ENCODE measurements at regions of chr16 and their contacts with region 1.

Region 1: DNA sequence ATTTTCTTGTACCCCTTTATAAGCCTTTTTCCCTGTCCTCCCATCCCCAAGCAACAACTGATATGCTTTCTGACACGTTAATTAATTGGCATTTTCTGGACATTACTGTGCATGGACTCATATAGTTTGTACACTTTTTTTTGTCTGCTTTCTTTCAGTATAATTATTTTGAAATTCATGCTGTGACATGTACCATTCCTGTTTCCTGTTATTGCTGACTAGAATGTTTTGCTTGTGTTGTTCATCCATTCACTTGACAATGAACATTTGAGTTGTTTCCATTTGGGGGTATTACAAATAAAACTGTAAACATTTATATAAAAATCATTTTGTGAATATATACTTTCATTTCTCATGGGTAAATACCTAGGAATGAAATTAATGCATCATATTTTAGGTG is 50.6 kb downstream of the RBBP6 start:
- DNase-seq: no peak

Region 2: DNA sequence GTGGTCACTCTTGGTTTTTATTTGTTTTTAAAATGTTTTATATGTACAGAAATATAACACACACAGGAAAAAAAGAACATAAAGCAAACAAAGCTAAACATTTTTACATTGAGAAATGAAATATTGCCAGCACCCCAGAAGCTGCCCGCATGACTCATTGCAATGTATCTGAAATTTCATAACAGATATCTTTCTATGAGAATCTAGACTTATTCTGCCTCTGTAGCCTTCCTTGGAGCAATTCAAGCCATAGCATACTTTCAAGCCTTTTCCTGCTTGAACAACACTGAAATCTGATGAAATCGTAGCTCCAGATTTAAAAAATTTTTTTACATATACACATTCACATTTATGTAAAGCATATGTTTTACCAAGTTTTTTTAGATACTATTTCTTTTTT is 36.3 kb after region 1 on chr16:
- intact Hi-C with region 1: no loop called
- DNase-seq: no peak

Region 3: GRCh38 chr16:24689145-24689544 is 99.1 kb after region 1 on chr16:
- intact Hi-C with region 1: loop called (anchors 10 kb)
- DNase-seq: peak in 4 of 10 donors; percentile 17 to 89 (median 32)

Measured in posterior cingulate gyrus (tissue), 11 donors.